Spleen (tissue), 13 donors: ENCODE measurements at regions of chr6 and their contacts with region 1.

Region 1: DNA sequence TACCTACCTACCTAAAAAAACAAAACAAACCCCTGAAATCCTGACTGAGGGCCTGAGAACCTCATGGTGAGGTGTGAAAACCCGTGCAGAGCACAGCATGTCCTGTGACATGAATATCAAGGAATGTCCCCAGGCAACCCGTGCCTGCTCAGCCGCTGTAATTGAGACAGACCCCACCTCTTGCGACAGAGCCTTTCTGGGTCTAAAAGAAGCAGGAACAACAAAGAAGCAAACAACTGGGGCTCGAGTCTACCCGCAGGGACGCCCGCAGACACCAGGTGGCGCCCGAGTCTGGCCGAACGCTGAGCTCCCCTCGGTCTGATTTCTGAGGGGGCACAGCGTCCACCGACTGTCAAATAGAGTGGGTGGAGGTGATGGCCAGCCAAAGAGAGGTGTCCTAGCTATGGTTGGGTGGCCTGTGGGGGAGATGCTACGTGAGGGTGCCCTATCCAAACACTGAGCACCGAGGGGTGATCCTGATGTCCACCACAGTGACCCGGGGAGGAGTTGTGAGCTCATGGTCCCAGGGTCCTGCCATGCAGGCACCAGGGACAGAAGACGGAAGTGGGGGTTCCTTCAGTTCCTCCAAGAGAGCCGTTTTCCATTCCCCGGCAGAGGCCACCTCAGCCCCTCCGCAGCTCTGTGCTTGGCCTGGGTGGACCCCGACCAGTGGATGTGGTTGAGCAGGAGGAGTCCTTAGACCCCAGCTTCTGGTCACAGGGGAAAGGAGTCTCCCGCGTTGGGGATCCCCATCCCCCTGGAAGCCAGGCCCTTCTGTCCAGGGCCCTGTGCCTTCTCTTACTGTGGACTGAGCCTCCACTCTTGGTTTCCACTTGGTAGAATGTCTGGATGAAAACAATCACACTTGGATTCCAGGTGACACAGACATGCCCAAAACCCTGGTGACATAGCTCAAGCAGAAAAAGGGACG is 268.2 kb downstream of the CDC5L start:
- DNase-seq: peak; percentile 90
- H3K4me3 ChIP-seq: peak overlapping the region in 1 of 8 donors; percentile 15
- H3K27ac ChIP-seq: no peak overlapping the region
- H3K4me1 ChIP-seq: peaks cover 5 to 21% (median 9%) of the 10 kb centered on the region in 6 donors
- H3K27me3 ChIP-seq: peaks cover 0 to 34% (median 3%) of the 10 kb centered on the region in 7 donors
- CTCF ChIP-seq: peak; percentile 73 to 95 (median 87)
- POLR2A ChIP-seq: no peak

Region 2: GRCh38 chr6:44456070-44456965 is 199.4 kb before region 1 on chr6:
- intact Hi-C with region 1: no loop called
- DNase-seq: peak; percentile 84
- H3K4me3 ChIP-seq: no peak overlapping the region
- H3K27ac ChIP-seq: no peak overlapping the region
- H3K4me1 ChIP-seq: peaks cover 0 to 22% (median 13%) of the 10 kb centered on the region in 6 donors
- H3K27me3 ChIP-seq: no peaks in the 10 kb centered on the region
- CTCF ChIP-seq: peak in 10 of 11 experiments; percentile 35 to 84 (median 72)
- POLR2A ChIP-seq: no peak

Region 3: GRCh38 chr6:44475779-44476434 is 179.8 kb before region 1 on chr6:
- intact Hi-C with region 1: loop called (anchors 10 kb)
- DNase-seq: peak; percentile 92
- H3K4me3 ChIP-seq: peak overlapping the region in 1 of 8 donors; percentile 20
- H3K27ac ChIP-seq: no peak overlapping the region
- H3K4me1 ChIP-seq: peaks cover 6 to 10% (median 8%) of the 10 kb centered on the region in 6 donors
- H3K27me3 ChIP-seq: peaks cover 0 to 35% (median 0%) of the 10 kb centered on the region in 7 donors
- CTCF ChIP-seq: peak; percentile 54 to 89 (median 86)
- POLR2A ChIP-seq: no peak

Region 4: DNA sequence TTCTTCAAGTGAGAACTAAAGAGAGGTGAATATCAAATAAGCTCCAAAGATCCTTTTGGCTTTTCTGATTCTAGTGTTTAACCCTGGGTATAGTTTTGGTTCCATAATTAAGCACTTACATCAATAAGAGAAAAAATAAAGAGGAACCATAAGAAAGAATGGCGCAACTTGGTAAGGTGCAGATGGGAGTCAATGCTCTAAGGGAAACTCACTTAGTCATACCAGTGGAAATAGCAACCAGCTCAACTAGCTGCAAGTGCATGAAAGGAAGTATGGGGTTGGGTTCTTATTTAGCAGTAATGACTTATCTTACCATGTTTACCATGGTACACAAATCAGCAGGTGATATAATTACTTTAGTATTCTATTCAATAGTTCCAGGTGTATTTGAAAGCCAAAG is 375.9 kb after region 1 on chr6:
- intact Hi-C with region 1: no loop called
- DNase-seq: no peak
- H3K4me3 ChIP-seq: no peak overlapping the region
- H3K27ac ChIP-seq: no peak overlapping the region
- H3K4me1 ChIP-seq: no peaks in the 10 kb centered on the region
- H3K27me3 ChIP-seq: no peaks in the 10 kb centered on the region
- CTCF ChIP-seq: no peak
- POLR2A ChIP-seq: no peak

Region 5: GRCh38 chr6:45714741-45715507 is 1059.2 kb after region 1 on chr6:
- intact Hi-C with region 1: loop called (anchors 5 kb)
- DNase-seq: no peak
- H3K4me3 ChIP-seq: no peak overlapping the region
- H3K27ac ChIP-seq: no peak overlapping the region
- H3K4me1 ChIP-seq: peaks cover 0 to 20% (median 5%) of the 10 kb centered on the region in 6 donors
- H3K27me3 ChIP-seq: peaks cover 0 to 15% (median 0%) of the 10 kb centered on the region in 7 donors
- CTCF ChIP-seq: peak; percentile 51 to 84 (median 68)
- POLR2A ChIP-seq: no peak

Region 6: DNA sequence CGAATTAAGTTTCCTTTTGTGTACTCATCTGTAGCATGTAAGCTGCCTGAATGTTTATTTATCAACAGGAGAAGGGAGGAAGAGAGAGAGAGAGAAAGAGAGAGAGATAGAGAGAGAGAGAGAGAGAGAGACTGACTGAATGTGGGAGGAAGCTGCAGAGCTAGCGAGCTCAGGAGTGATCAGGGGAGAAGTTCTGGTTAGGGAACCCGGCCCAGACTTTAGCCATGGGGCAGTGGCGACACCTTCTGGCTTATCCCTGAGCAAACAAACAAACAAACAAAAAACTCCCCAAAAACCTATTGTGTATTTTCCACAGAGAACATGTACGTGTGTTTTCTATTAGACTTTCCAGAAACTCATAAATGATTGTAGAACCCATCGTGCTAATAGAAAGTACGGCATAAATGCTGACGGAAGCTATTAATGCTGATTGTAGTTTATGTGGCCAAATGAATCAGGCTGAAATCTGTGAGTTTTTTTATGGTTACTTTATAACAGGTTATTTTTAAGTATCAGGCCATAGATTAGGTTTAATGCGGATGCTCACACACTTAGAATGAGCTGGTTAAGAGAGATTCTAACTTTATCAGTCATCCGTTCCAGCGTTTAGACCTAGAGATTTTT is 1267.2 kb after region 1 on chr6:
- intact Hi-C with region 1: loop called (anchors 5 kb)
- DNase-seq: peak; percentile 85
- H3K4me3 ChIP-seq: no peak overlapping the region
- H3K27ac ChIP-seq: peak overlapping the region in 4 of 8 donors; percentile 3 to 41 (median 25)
- H3K4me1 ChIP-seq: peaks cover 0 to 21% (median 8%) of the 10 kb centered on the region in 6 donors
- H3K27me3 ChIP-seq: peaks cover 0 to 3% (median 0%) of the 10 kb centered on the region in 7 donors
- CTCF ChIP-seq: peak; percentile 16 to 78 (median 54)
- POLR2A ChIP-seq: no peak